ENCODE measurements at regions of chr17 and their contacts with region 1.

Region 1: GRCh38 chr17:69235338-69235930 is 6.8 kb upstream of the ABCA10 start:
- DNase-seq: peak; percentile 67
- H3K4me3 ChIP-seq: no peak overlapping the region
- H3K27ac ChIP-seq: no peak overlapping the region
- H3K4me1 ChIP-seq: no peaks in the 10 kb centered on the region
- H3K27me3 ChIP-seq: no peaks in the 10 kb centered on the region
- CTCF ChIP-seq: peak; percentile 52 to 79

Region 2: GRCh38 chr17:68777243-68777855 is 458.1 kb before region 1 on chr17:
- CTCF ChIA-PET with region 1: interaction called, 3 read pairs
- dilution Hi-C with region 1: loop called (anchors 5 kb)
- in situ Hi-C with region 1: loop called (anchors 5 kb)
- intact Hi-C with region 1: loop called (anchors 1 kb)
- DNase-seq: peak; percentile 37
- H3K4me3 ChIP-seq: no peak overlapping the region
- H3K27ac ChIP-seq: no peak overlapping the region
- H3K4me1 ChIP-seq: no peaks in the 10 kb centered on the region
- H3K27me3 ChIP-seq: no peaks in the 10 kb centered on the region
- CTCF ChIP-seq: peak; percentile 57 to 76

Region 3: DNA sequence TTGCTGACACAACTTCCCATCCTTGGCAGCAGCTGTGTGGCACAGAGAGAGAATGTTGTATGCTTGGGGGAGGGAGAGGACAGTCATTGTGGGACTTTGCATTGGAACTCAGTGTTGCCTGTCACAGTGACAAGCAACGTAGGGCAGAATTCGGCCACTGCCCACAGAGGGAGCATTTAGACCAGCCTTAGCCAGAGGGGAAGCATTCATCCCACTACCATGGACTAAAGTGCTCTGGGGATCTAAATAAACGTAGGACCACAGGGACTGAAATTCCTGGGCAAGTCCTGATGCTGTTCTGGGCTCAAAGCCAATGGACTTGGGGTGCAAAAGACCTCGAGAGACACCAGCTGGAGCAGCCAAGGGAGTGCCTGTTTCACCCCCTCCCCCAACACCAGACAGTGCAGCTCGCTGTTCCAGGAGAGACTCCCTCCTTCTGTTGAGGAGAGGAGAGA is 325.2 kb before region 1 on chr17:
- CTCF ChIA-PET with region 1: no interaction called
- dilution Hi-C with region 1: no loop called
- in situ Hi-C with region 1: no loop called
- intact Hi-C with region 1: loop called (anchors 5 kb)
- DNase-seq: peak; percentile 5
- H3K4me3 ChIP-seq: no peak overlapping the region
- H3K27ac ChIP-seq: peak overlapping the region; percentile 89
- H3K4me1 ChIP-seq: peaks cover 26% of the 10 kb centered on the region
- H3K27me3 ChIP-seq: no peaks in the 10 kb centered on the region
- CTCF ChIP-seq: no peak

Region 4: DNA sequence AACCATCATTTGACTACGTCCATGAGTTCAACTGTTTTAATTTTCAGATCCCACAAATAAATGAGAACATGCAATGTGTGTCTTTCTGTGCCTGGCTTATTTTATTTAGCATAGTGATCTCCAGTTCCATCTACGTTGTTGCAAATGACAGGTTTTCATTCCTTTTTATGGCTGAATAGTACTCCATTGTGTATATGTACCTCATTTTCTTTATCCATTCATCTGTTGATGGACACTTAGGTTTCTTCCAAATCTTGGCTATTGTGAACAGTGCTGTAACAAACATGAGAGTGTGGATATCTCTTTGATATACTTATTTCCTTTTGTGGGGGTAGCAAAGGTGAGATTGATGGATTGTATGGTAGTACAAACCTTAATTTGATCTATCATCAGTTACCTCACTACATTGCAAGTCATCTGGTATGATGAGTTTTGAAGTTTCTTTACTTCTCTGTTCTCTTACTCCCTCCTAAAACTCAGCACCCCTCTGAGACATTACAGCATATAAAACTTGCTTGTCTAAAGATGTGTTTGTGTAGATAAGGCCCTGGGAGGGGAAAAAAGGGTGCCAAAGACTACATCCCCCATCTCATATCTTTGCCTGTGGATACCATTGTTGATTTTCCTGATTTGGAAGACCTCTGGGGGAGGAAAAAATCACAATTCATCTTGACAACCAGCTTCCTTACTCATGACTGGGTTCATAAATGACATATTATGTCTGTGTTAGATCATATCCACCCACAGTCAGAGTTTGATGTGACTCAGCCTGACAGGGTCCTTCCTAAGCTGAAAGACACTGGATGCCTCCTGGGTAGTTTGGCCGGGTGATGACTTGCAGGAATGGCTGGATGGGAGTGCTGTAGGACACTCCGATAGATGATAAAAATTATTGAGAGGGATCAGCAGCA is 222.3 kb before region 1 on chr17:
- CTCF ChIA-PET with region 1: no interaction called
- dilution Hi-C with region 1: no loop called
- in situ Hi-C with region 1: no loop called
- intact Hi-C with region 1: no loop called
- DNase-seq: peak; percentile 31
- H3K4me3 ChIP-seq: no peak overlapping the region
- H3K27ac ChIP-seq: no peak overlapping the region
- H3K4me1 ChIP-seq: no peaks in the 10 kb centered on the region
- H3K27me3 ChIP-seq: no peaks in the 10 kb centered on the region
- CTCF ChIP-seq: no peak

Region 5: GRCh38 chr17:69060822-69061221 is 174.6 kb before region 1 on chr17 and contains the start of gene ABCA9:
- CTCF ChIA-PET with region 1: no interaction called
- dilution Hi-C with region 1: no loop called
- in situ Hi-C with region 1: loop called in 1 of 2 experiments (anchors 25 kb)
- intact Hi-C with region 1: loop called (anchors 2 kb)
- DNase-seq: no peak
- H3K4me3 ChIP-seq: no peak within 1 kb of the TSS
- H3K27ac ChIP-seq: no peak within 1 kb of the TSS
- H3K4me1 ChIP-seq: no peaks in the 10 kb centered on the region
- H3K27me3 ChIP-seq: no peaks in the 10 kb centered on the region
- CTCF ChIP-seq: no peak
- total RNA-seq, gene ABCA9: 0.31 to 1.8 TPM